GM12878 (cell line): ENCODE measurements at regions of chr4 and their contacts with region 1.

Region 1: GRCh38 chr4:142567199-142567598 is 278.9 kb downstream of the INPP4B start:
- DNase-seq: no peak
- ATAC-seq: peak; percentile 70
- H3K4me3 ChIP-seq: no peak overlapping the region
- H3K27ac ChIP-seq: no peak overlapping the region
- H3K4me1 ChIP-seq: no peaks in the 10 kb centered on the region
- H3K27me3 ChIP-seq: no peaks in the 10 kb centered on the region
- CTCF ChIP-seq: peak in 1 of 3 experiments; percentile 28; a peak in 2 of 6 replicates
- EP300 ChIP-seq: no peak
- POLR2A ChIP-seq: no peak
- RAD21 ChIP-seq: no peak

Region 2: GRCh38 chr4:142126890-142127497 is 440.2 kb before region 1 on chr4:
- CTCF ChIA-PET with region 1: no interaction called
- POLR2A ChIA-PET with region 1: no interaction called
- RAD21 ChIA-PET with region 1: interaction called, 6 read pairs
- SMC1A ChIA-PET with region 1: interaction called, 6 read pairs
- in situ Hi-C with region 1: no loop called
- intact Hi-C with region 1: loop called (anchors 10 kb)
- DNase-seq: peak; percentile 13
- ATAC-seq: peak; percentile 76
- H3K4me3 ChIP-seq: no peak overlapping the region
- H3K27ac ChIP-seq: no peak overlapping the region
- H3K4me1 ChIP-seq: no peaks in the 10 kb centered on the region
- H3K27me3 ChIP-seq: no peaks in the 10 kb centered on the region
- CTCF ChIP-seq: peak; percentile 71 to 77 (median 74)
- EP300 ChIP-seq: no peak
- POLR2A ChIP-seq: no peak
- RAD21 ChIP-seq: peak; percentile 85

Region 3: GRCh38 chr4:142347241-142347640 is 220.0 kb before region 1 on chr4:
- CTCF ChIA-PET with region 1: interaction called, 119 read pairs
- POLR2A ChIA-PET with region 1: interaction called, 5 read pairs
- RAD21 ChIA-PET with region 1: interaction called, 133 read pairs
- SMC1A ChIA-PET with region 1: interaction called, 120 read pairs
- in situ Hi-C with region 1: no loop called
- intact Hi-C with region 1: no loop called
- DNase-seq: no peak
- ATAC-seq: no peak
- H3K4me3 ChIP-seq: no peak overlapping the region
- H3K27ac ChIP-seq: no peak overlapping the region
- H3K4me1 ChIP-seq: no peaks in the 10 kb centered on the region
- H3K27me3 ChIP-seq: no peaks in the 10 kb centered on the region
- CTCF ChIP-seq: no peak
- EP300 ChIP-seq: no peak
- POLR2A ChIP-seq: no peak
- RAD21 ChIP-seq: no peak

Region 4: GRCh38 chr4:142372530-142373260 is 194.5 kb before region 1 on chr4:
- CTCF ChIA-PET with region 1: interaction called, 12 read pairs
- POLR2A ChIA-PET with region 1: interaction called, 4 read pairs
- RAD21 ChIA-PET with region 1: interaction called, 15 read pairs
- SMC1A ChIA-PET with region 1: interaction called, 17 read pairs
- in situ Hi-C with region 1: no loop called
- intact Hi-C with region 1: no loop called
- DNase-seq: no peak
- ATAC-seq: peak; percentile 6
- H3K4me3 ChIP-seq: no peak overlapping the region
- H3K27ac ChIP-seq: no peak overlapping the region
- H3K4me1 ChIP-seq: no peaks in the 10 kb centered on the region
- H3K27me3 ChIP-seq: no peaks in the 10 kb centered on the region
- CTCF ChIP-seq: no peak
- EP300 ChIP-seq: no peak
- POLR2A ChIP-seq: no peak
- RAD21 ChIP-seq: no peak

Region 5: GRCh38 chr4:142405021-142405694 is 162.0 kb before region 1 on chr4:
- CTCF ChIA-PET with region 1: interaction called, 60 read pairs
- POLR2A ChIA-PET with region 1: interaction called, 29 read pairs
- RAD21 ChIA-PET with region 1: interaction called, 55 read pairs
- SMC1A ChIA-PET with region 1: interaction called, 63 read pairs
- in situ Hi-C with region 1: no loop called
- intact Hi-C with region 1: loop called (anchors 5 kb)
- DNase-seq: peak; percentile 57
- ATAC-seq: peak; percentile 58
- H3K4me3 ChIP-seq: 0 out of 2 replicates have a peak overlapping the region, but pooled peaks have one; percentile 49
- H3K27ac ChIP-seq: no peak overlapping the region
- H3K4me1 ChIP-seq: no peaks in the 10 kb centered on the region; the same call in 1 of the 2 replicates
- H3K27me3 ChIP-seq: no peaks in the 10 kb centered on the region
- CTCF ChIP-seq: no peak
- EP300 ChIP-seq: 0 out of 4 replicates have a peak, but pooled peaks of 1 of the 2 experiments have one; percentile 30
- POLR2A ChIP-seq: no peak
- RAD21 ChIP-seq: no peak

Region 6: DNA sequence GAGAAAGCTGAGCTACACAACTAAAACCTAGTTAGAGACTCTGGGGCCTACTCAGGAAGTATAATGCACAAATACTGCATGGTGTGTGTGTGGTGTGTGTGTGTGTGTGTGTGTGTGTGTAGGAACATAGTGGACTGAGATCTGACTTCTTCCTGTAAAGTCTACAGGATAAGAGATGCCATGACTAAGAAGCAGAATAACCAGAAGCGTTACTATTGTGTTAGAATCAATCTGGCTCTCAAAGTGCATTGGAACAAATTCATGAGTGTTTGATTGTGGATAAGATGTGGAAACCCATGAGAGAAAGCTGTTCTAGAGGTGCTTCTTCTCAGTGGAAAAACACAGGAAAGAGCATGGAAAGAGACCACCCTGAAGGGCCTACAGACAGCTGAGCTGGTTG is 23.2 kb before region 1 on chr4:
- CTCF ChIA-PET with region 1: interaction called, 19 read pairs
- POLR2A ChIA-PET with region 1: interaction called, 5 read pairs
- RAD21 ChIA-PET with region 1: interaction called, 60 read pairs
- SMC1A ChIA-PET with region 1: interaction called, 53 read pairs
- in situ Hi-C with region 1: no loop called
- intact Hi-C with region 1: no loop called
- DNase-seq: no peak
- ATAC-seq: peak; percentile 17
- H3K4me3 ChIP-seq: no peak overlapping the region
- H3K27ac ChIP-seq: no peak overlapping the region
- H3K4me1 ChIP-seq: no peaks in the 10 kb centered on the region
- H3K27me3 ChIP-seq: no peaks in the 10 kb centered on the region
- CTCF ChIP-seq: no peak
- EP300 ChIP-seq: no peak
- POLR2A ChIP-seq: no peak
- RAD21 ChIP-seq: no peak

Region 7: DNA sequence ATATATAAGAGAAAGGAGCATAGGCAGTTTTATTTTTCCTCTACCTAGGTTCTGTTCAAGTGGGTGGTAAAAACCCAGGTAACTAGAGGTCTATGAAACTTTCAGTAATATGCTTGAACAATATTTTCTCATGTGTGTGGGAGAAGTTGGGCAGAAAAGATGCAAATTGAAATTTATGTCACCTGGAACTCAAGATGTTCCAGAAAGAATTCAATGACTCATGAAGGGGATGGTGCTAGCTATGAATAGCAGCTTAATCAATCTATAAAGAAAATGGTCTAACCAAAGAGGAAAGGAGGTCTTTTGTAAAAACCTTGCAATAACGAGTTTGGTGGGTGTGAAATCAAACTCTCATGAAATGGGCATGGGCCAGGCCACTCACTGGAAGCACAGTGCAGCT is 15.1 kb after region 1 on chr4:
- CTCF ChIA-PET with region 1: interaction called, 5 read pairs
- POLR2A ChIA-PET with region 1: interaction called, 4 read pairs
- RAD21 ChIA-PET with region 1: interaction called, 9 read pairs
- SMC1A ChIA-PET with region 1: interaction called, 10 read pairs
- in situ Hi-C with region 1: no loop called
- intact Hi-C with region 1: no loop called
- DNase-seq: no peak
- ATAC-seq: peak; percentile 51
- H3K4me3 ChIP-seq: no peak overlapping the region
- H3K27ac ChIP-seq: no peak overlapping the region
- H3K4me1 ChIP-seq: no peaks in the 10 kb centered on the region
- H3K27me3 ChIP-seq: no peaks in the 10 kb centered on the region
- CTCF ChIP-seq: no peak
- EP300 ChIP-seq: no peak
- POLR2A ChIP-seq: no peak
- RAD21 ChIP-seq: no peak

Region 8: DNA sequence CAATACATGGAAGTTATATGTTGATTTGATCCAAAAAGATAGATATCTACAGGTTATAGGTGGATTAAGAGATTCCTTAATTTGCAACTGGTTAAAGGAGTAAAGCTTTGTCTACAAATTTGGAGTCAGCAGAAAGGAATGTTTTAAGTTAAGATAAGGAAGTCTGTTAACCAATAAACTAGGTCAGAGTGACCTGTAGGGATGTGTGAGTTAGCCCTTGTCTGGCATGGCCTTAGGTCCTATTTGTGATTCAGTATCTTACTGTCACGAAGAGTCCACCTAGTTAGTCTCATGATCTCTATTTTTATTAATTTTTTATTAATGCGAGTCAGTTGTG is 48.1 kb after region 1 on chr4:
- CTCF ChIA-PET with region 1: no interaction called
- POLR2A ChIA-PET with region 1: no interaction called
- RAD21 ChIA-PET with region 1: no interaction called
- SMC1A ChIA-PET with region 1: no interaction called
- in situ Hi-C with region 1: no loop called
- intact Hi-C with region 1: no loop called
- DNase-seq: no peak
- ATAC-seq: no peak
- H3K4me3 ChIP-seq: no peak overlapping the region
- H3K27ac ChIP-seq: no peak overlapping the region
- H3K4me1 ChIP-seq: no peaks in the 10 kb centered on the region
- H3K27me3 ChIP-seq: no peaks in the 10 kb centered on the region
- CTCF ChIP-seq: no peak
- EP300 ChIP-seq: no peak
- POLR2A ChIP-seq: no peak
- RAD21 ChIP-seq: no peak